Activated naive CD4-positive, alpha-beta T cell treated with anti-CD3 and anti-CD28 coated beads, Interleukin-2, amount 10 ng/mL, durations not matched to agents 7 days and 5 days (primary cell): ENCODE measurements at regions of chr11 and their contacts with region 1.

Region 1: GRCh38 chr11:2305140-2305840 is 3.5 kb downstream of the TSPAN32 start:
- DNase-seq: peak; percentile 90
- H3K4me3 Mint-ChIP-seq: peak overlapping the region; percentile 68
- H3K27ac Mint-ChIP-seq: peak overlapping the region; percentile 85
- H3K4me1 Mint-ChIP-seq: peaks cover 52% of the 10 kb centered on the region
- H3K27me3 Mint-ChIP-seq: no peaks in the 10 kb centered on the region

Region 2: GRCh38 chr11:1478544-1478943 is 826.7 kb before region 1 on chr11:
- CTCF ChIA-PET with region 1: no interaction called
- DNase-seq: no peak
- H3K4me3 Mint-ChIP-seq: no peak overlapping the region
- H3K27ac Mint-ChIP-seq: no peak overlapping the region
- H3K4me1 Mint-ChIP-seq: no peaks in the 10 kb centered on the region
- H3K27me3 Mint-ChIP-seq: no peaks in the 10 kb centered on the region

Region 3: GRCh38 chr11:2387266-2387987 is 82.1 kb after region 1 on chr11:
- CTCF ChIA-PET with region 1: interaction called, 16 read pairs
- DNase-seq: peak; percentile 40
- H3K4me3 Mint-ChIP-seq: no peak overlapping the region
- H3K27ac Mint-ChIP-seq: peak overlapping the region; percentile 49
- H3K4me1 Mint-ChIP-seq: peaks cover 56% of the 10 kb centered on the region
- H3K27me3 Mint-ChIP-seq: no peaks in the 10 kb centered on the region

Region 4: DNA sequence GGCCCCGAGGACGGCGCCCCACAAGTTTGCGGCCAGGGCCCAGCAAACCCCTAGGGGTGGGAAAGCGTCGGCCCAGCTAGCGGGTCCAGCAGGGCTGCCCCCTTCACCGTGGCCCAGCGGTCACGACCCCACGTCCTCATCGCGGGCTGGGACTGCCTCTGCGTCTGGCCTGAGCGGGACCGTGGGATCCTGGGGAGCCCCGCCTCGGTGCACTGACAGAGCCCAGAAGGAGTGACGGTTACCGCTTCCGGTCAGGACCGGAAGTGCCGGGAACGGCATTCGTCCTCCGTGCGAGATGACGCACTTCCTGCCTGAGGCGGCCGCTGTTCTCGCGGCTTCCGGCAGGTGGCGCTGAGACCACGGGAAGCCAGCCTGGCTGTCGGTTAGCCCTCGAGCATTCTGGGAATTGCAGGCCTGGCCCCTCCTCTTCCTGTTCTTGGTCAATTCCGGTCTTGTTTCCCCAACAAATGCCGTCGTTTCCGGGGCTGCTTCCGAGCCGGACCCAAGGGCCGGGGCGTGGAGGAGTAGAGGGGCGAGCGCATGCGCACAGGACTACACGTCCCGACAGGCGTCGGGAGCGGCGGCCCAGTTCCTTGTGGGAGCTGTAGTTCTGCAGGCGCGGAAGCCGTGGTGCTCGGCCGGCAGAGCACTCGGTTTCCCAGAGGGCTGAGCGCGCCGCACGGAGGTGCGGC is 94.9 kb after region 1 on chr11 and contains the start of gene TSSC4:
- CTCF ChIA-PET with region 1: interaction called, 27 read pairs
- DNase-seq: peak; percentile 99
- H3K4me3 Mint-ChIP-seq: peak within 1 kb of the TSS; percentile 88
- H3K27ac Mint-ChIP-seq: peak within 1 kb of the TSS; percentile 90
- H3K4me1 Mint-ChIP-seq: peaks cover 14% of the 10 kb centered on the region
- H3K27me3 Mint-ChIP-seq: peaks cover 7% of the 10 kb centered on the region

Region 5: GRCh38 chr11:2413742-2414579 is 108.7 kb after region 1 on chr11:
- CTCF ChIA-PET with region 1: interaction called, 279 read pairs
- DNase-seq: no peak
- H3K4me3 Mint-ChIP-seq: no peak overlapping the region
- H3K27ac Mint-ChIP-seq: no peak overlapping the region
- H3K4me1 Mint-ChIP-seq: no peaks in the 10 kb centered on the region
- H3K27me3 Mint-ChIP-seq: no peaks in the 10 kb centered on the region

Region 6: GRCh38 chr11:2426826-2427521 is 121.7 kb after region 1 on chr11:
- CTCF ChIA-PET with region 1: interaction called, 279 read pairs
- DNase-seq: no peak
- H3K4me3 Mint-ChIP-seq: no peak overlapping the region
- H3K27ac Mint-ChIP-seq: no peak overlapping the region
- H3K4me1 Mint-ChIP-seq: no peaks in the 10 kb centered on the region
- H3K27me3 Mint-ChIP-seq: no peaks in the 10 kb centered on the region

Region 7: DNA sequence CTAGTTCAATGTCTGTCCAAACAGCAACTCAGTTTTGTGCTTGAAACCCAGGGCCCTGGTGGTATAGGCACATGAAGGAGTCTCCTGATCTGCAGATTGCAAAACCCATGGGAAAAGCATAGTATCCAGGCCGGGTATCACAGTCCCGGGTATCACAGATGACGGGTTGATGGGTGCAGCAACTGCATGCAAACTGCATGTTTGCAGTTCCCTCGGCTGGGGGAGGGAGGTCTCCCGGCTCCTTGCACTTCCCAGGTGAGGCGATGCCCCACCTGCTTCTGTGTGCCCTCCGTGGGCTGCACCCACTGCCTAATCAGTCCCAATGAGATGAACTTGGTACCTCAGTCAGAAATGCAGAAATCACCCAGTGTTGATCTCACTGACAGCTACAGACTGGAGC is 193.5 kb after region 1 on chr11:
- CTCF ChIA-PET with region 1: no interaction called
- DNase-seq: no peak
- H3K4me3 Mint-ChIP-seq: no peak overlapping the region
- H3K27ac Mint-ChIP-seq: no peak overlapping the region
- H3K4me1 Mint-ChIP-seq: no peaks in the 10 kb centered on the region
- H3K27me3 Mint-ChIP-seq: peaks cover 9% of the 10 kb centered on the region

Region 8: DNA sequence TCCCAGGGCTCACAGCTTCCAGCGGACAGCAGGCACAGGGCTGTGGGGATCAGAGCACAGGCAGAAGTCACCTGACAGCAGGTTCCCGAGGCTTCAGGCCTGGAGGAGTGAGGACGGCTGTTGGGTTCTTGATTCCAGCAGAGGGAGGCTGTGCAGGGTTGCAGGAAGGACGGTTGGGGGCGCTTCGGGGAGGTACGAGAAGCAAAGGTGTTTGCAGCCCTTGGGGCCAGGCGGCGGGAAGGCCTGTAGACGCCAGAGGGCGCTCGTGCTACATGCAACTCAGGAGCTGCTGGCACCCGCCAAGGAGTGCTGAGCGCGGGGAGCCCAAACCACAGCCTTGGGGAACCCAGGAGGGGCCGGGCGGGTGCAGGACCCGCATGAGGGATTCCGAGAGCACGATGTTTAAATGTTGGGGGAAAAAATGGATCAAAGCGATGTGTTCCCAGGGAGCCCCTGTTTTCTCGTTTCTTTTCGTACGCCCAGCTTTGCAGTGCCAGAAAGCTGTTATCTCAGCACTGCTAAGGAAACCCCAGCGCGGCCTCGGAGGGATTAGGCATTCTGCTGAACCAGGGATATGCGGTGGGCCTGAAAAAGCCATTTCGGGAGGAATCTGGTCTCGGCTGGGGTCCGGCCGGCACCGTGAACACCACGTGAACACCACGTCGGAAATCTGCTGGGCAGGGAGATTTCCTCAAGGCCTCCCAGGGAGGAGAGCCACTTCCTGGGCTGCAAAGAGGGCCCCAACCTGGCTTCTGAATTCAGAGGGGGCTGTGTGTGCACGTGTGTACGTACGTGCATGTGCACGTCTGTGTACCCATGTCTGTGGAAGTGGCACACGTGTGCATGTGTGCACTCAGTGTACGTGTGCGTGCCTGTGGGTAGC is 227.7 kb after region 1 on chr11:
- CTCF ChIA-PET with region 1: interaction called, 22 read pairs
- DNase-seq: peak; percentile 95
- H3K4me3 Mint-ChIP-seq: peak overlapping the region; percentile 40
- H3K27ac Mint-ChIP-seq: peak overlapping the region; percentile 76
- H3K4me1 Mint-ChIP-seq: peaks cover 19% of the 10 kb centered on the region
- H3K27me3 Mint-ChIP-seq: peaks cover 5% of the 10 kb centered on the region